ENCODE measurements at regions of chr17 and their contacts with region 1.

Region 1: DNA sequence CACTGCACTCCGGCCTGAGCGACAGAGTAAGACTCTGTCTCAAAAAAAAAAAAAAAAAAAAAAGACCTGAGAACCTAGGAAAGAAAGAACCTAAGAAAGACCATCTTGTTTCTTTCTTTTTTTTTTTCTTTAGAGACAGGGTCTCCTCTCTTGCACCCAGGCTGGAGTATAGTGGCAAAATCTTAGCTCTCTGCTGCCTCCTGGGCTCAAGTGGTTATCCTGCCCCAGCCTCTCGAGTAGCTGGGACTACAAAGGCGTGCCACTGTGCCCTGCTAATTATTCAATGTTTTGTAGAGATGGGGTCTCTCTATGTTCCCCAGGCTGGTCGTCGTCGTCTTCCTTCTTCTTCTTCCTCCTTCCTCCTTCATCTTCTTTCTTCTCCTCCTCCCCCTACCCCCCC is 7.8 kb upstream of the BIRC5 start:
- DNase-seq: no peak
- ATAC-seq: no peak
- H3K4me3 ChIP-seq: no peak overlapping the region
- H3K27ac ChIP-seq: no peak overlapping the region
- H3K4me1 ChIP-seq: no peaks in the 10 kb centered on the region
- H3K27me3 ChIP-seq: no peaks in the 10 kb centered on the region
- CTCF ChIP-seq: no peak

Region 2: GRCh38 chr17:78032166-78032565 is 174.1 kb before region 1 on chr17:
- CTCF ChIA-PET with region 1: interaction called, 12 read pairs
- POLR2A ChIA-PET with region 1: no interaction called
- in situ Hi-C with region 1: no loop called
- intact Hi-C with region 1: no loop called
- DNase-seq: no peak
- ATAC-seq: 0 out of 2 replicates have a peak, but pooled peaks have one; percentile 64
- H3K4me3 ChIP-seq: no peak overlapping the region
- H3K27ac ChIP-seq: no peak overlapping the region
- H3K4me1 ChIP-seq: no peaks in the 10 kb centered on the region
- H3K27me3 ChIP-seq: no peaks in the 10 kb centered on the region
- CTCF ChIP-seq: no peak

Region 3: GRCh38 chr17:78082988-78083387 is 123.3 kb before region 1 on chr17:
- CTCF ChIA-PET with region 1: interaction called, 17 read pairs
- POLR2A ChIA-PET with region 1: no interaction called
- in situ Hi-C with region 1: no loop called
- intact Hi-C with region 1: no loop called
- DNase-seq: no peak
- ATAC-seq: no peak
- H3K4me3 ChIP-seq: no peak overlapping the region
- H3K27ac ChIP-seq: no peak overlapping the region
- H3K4me1 ChIP-seq: no peaks in the 10 kb centered on the region
- H3K27me3 ChIP-seq: no peaks in the 10 kb centered on the region
- CTCF ChIP-seq: no peak

Region 4: DNA sequence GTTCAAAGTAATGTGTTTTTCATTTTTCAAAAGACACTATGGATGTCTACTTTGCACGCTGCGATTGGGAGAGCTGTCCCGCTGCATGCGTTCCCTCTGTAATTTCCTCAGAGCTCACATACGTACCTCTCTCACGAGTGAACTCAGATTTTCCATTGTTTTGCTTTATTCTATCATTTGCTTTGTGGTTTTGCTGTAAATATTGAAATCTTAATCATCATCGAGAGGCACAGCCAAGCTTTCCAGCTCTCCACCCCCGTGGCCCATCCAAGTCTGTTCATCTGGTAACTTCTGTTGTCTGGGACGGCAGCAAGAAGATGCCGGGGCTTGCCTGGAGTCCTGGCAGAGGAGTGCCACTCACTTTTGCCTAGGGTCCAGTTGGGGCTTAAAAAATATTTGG is 98.8 kb before region 1 on chr17:
- CTCF ChIA-PET with region 1: interaction called, 11 read pairs
- POLR2A ChIA-PET with region 1: no interaction called
- in situ Hi-C with region 1: no loop called
- intact Hi-C with region 1: no loop called
- DNase-seq: no peak
- ATAC-seq: no peak
- H3K4me3 ChIP-seq: no peak overlapping the region
- H3K27ac ChIP-seq: no peak overlapping the region
- H3K4me1 ChIP-seq: no peaks in the 10 kb centered on the region
- H3K27me3 ChIP-seq: no peaks in the 10 kb centered on the region
- CTCF ChIP-seq: no peak

Region 5: GRCh38 chr17:78186692-78187595 is 19.4 kb before region 1 on chr17 and contains the starts of genes AFMID and TK1:
- CTCF ChIA-PET with region 1: interaction called, 17 read pairs
- POLR2A ChIA-PET with region 1: interaction called, 3 read pairs
- in situ Hi-C with region 1: no loop called
- intact Hi-C with region 1: no loop called
- DNase-seq: peak; percentile 74
- ATAC-seq: peak; percentile 96
- H3K4me3 ChIP-seq: peak within 1 kb of the TSS; percentile 65 to 86
- H3K27ac ChIP-seq: peak within 1 kb of the TSS; percentile 84
- H3K4me1 ChIP-seq: peaks cover 26% of the 10 kb centered on the region
- H3K27me3 ChIP-seq: no peaks in the 10 kb centered on the region
- CTCF ChIP-seq: no peak; the same call in 1 of the 2 replicates
- total RNA-seq, gene AFMID: 59.3 TPM
- total RNA-seq, gene TK1: 153 TPM

Region 6: DNA sequence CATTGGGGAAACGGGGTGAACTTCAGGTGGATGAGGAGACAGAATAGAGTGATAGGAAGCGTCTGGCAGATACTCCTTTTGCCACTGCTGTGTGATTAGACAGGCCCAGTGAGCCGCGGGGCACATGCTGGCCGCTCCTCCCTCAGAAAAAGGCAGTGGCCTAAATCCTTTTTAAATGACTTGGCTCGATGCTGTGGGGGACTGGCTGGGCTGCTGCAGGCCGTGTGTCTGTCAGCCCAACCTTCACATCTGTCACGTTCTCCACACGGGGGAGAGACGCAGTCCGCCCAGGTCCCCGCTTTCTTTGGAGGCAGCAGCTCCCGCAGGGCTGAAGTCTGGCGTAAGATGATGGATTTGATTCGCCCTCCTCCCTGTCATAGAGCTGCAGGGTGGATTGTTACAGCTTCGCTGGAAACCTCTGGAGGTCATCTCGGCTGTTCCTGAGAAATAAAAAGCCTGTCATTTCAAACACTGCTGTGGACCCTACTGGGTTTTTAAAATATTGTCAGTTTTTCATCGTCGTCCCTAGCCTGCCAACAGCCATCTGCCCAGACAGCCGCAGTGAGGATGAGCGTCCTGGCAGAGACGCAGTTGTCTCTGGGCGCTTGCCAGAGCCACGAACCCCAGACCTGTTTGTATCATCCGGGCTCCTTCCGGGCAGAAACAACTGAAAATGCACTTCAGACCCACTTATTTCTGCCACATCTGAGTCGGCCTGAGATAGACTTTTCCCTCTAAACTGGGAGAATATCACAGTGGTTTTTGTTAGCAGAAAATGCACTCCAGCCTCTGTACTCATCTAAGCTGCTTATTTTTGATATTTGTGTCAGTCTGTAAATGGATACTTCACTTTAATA is 18.2 kb after region 1 on chr17:
- CTCF ChIA-PET with region 1: no interaction called
- POLR2A ChIA-PET with region 1: interaction called, 15 read pairs
- in situ Hi-C with region 1: no loop called
- intact Hi-C with region 1: no loop called
- DNase-seq: no peak
- ATAC-seq: no peak
- H3K4me3 ChIP-seq: no peak overlapping the region
- H3K27ac ChIP-seq: no peak overlapping the region
- H3K4me1 ChIP-seq: no peaks in the 10 kb centered on the region
- H3K27me3 ChIP-seq: no peaks in the 10 kb centered on the region
- CTCF ChIP-seq: no peak

Region 7: GRCh38 chr17:78241277-78242023 is 35.2 kb after region 1 on chr17:
- CTCF ChIA-PET with region 1: no interaction called
- POLR2A ChIA-PET with region 1: interaction called, 17 read pairs
- in situ Hi-C with region 1: no loop called
- intact Hi-C with region 1: no loop called
- DNase-seq: no peak
- ATAC-seq: peak; percentile 52
- H3K4me3 ChIP-seq: no peak overlapping the region
- H3K27ac ChIP-seq: no peak overlapping the region
- H3K4me1 ChIP-seq: no peaks in the 10 kb centered on the region
- H3K27me3 ChIP-seq: no peaks in the 10 kb centered on the region
- CTCF ChIP-seq: no peak

Region 8: GRCh38 chr17:78300962-78301822 is 94.9 kb after region 1 on chr17:
- CTCF ChIA-PET with region 1: no interaction called
- POLR2A ChIA-PET with region 1: no interaction called
- in situ Hi-C with region 1: no loop called
- intact Hi-C with region 1: no loop called
- DNase-seq: no peak
- ATAC-seq: peak; percentile 52; the same call in 1 of the 2 replicates
- H3K4me3 ChIP-seq: no peak overlapping the region
- H3K27ac ChIP-seq: peak overlapping the region; percentile 64; the same call in 1 of the 2 replicates
- H3K4me1 ChIP-seq: no peaks in the 10 kb centered on the region; the same call in 1 of the 2 replicates
- H3K27me3 ChIP-seq: no peaks in the 10 kb centered on the region
- CTCF ChIP-seq: no peak